ENCODE measurements at regions of chr22 and their contacts with region 1.

Region 1: DNA sequence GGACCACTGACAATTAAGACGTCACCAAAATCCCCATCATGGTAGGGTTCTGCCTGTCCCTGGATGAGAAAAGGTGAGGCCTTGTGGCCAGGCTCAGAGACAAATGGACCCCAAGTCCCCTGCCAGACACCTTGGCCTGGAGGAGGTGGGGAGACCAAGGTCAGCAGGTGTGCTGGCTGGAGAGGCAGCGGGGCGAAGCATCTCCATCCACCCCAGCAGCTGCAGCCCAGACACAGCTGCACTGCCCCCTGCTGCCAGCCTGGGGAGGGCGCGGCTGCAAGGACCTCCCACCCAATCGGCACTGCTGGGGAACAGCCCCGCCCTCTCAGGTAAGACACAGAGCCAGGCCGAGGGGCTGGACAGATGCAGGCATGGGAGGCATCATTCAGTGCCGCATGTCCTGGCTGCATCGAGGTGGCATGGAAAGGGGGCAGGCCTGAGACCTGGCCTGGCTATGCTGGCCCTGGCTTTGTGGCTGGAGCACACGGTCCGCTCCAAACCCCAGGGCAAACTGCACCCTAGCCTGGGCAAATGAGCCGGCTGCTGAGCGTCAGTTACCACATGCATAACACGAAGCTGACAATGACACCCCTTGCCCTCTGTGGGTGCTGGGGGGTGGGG is 12.2 kb upstream of the MFNG start:
- DNase-seq: peak; percentile 43 to 77 (median 63)
- H3K4me3 ChIP-seq: no peak overlapping the region
- H3K4me3 Mint-ChIP-seq: no peak overlapping the region
- H3K27ac ChIP-seq: no peak overlapping the region
- H3K27ac Mint-ChIP-seq: no peak overlapping the region
- H3K4me1 ChIP-seq: peaks cover 20% of the 10 kb centered on the region
- H3K4me1 Mint-ChIP-seq: peaks cover 13 to 31% (median 16%) of the 10 kb centered on the region in 3 donors
- H3K27me3 ChIP-seq: no peaks in the 10 kb centered on the region
- H3K27me3 Mint-ChIP-seq: peaks cover 1 to 23% of the 10 kb centered on the region in 2 donors

Region 2: GRCh38 chr22:37486224-37486845 is 12.1 kb before region 1 on chr22 and contains the start of gene MFNG:
- CTCF ChIA-PET with region 1: interaction called, 18 read pairs
- POLR2A ChIA-PET with region 1: interaction called, 4 read pairs
- DNase-seq: peak; percentile 64 to 83 (median 70)
- H3K4me3 ChIP-seq: peak within 1 kb of the TSS; percentile 95
- H3K4me3 Mint-ChIP-seq: peak within 1 kb of the TSS; percentile 90 to 98 (median 94)
- H3K27ac ChIP-seq: peak within 1 kb of the TSS; percentile 76
- H3K27ac Mint-ChIP-seq: peak within 1 kb of the TSS; percentile 89 to 99 (median 98)
- H3K4me1 ChIP-seq: peaks cover 63% of the 10 kb centered on the region
- H3K4me1 Mint-ChIP-seq: peaks cover 47 to 75% (median 59%) of the 10 kb centered on the region in 3 donors
- H3K27me3 ChIP-seq: no peaks in the 10 kb centered on the region
- H3K27me3 Mint-ChIP-seq: no peaks in the 10 kb centered on the region
- total RNA-seq, gene MFNG: 162 to 171 TPM

Region 3: DNA sequence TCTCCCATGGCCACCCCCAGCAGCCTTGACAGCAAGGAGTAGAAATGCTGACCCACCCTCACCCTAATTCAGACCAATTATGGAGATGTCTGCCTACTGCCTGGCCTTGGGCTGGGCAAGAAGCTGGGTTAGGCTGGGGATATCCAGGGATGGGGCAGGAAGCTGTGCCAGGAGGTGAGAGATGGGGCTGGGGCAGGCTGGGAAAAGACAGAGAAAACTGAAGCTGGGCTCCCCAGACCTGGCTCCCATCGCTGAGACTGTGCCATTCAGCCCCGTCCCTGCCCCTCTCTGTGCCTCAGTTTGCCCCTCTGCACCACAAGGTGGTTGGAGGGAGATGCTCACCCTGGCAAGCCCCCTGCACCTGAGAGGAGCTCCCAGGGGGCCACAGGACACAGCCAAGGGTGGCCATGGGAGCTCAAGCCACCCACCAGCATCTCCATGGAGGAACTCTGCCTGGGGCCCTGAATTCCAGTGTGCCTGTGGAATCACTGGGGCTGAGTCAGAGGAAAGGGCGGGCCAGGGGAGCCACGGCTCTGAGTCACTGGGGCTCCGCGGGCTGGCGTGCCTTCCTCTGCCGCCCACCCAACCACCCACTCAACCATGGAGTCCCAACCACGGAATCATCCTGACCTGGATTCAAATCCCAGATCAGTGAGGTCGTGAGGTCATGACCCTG is 26.8 kb after region 1 on chr22:
- CTCF ChIA-PET with region 1: no interaction called
- POLR2A ChIA-PET with region 1: no interaction called
- DNase-seq: no peak
- H3K4me3 ChIP-seq: no peak overlapping the region
- H3K4me3 Mint-ChIP-seq: no peak overlapping the region
- H3K27ac ChIP-seq: no peak overlapping the region
- H3K27ac Mint-ChIP-seq: no peak overlapping the region
- H3K4me1 ChIP-seq: peaks cover 6% of the 10 kb centered on the region
- H3K4me1 Mint-ChIP-seq: peaks cover 0 to 6% (median 5%) of the 10 kb centered on the region in 3 donors
- H3K27me3 ChIP-seq: peaks cover 12% of the 10 kb centered on the region
- H3K27me3 Mint-ChIP-seq: peaks cover 27 to 50% of the 10 kb centered on the region in 2 donors

Measured in CD8-positive, alpha-beta memory T cell (primary cell).